ENCODE measurements at regions of chr22 and their contacts with region 1.

Region 1: GRCh38 chr22:36486619-36487384 is 5.4 kb upstream of the TXN2 start:
- DNase-seq: peak; percentile 50 to 86
- ATAC-seq: no peak
- H3K4me3 ChIP-seq: no peak overlapping the region
- H3K4me3 Mint-ChIP-seq: no peak overlapping the region
- H3K27ac ChIP-seq: no peak overlapping the region
- H3K27ac Mint-ChIP-seq: no peak overlapping the region
- H3K4me1 ChIP-seq: peaks cover 7% of the 10 kb centered on the region
- H3K4me1 Mint-ChIP-seq: peaks cover 0 to 5% of the 10 kb centered on the region in 2 donors
- H3K27me3 ChIP-seq: no peaks in the 10 kb centered on the region
- H3K27me3 Mint-ChIP-seq: no peaks in the 10 kb centered on the region
- CTCF ChIP-seq: peak; percentile 56

Region 2: GRCh38 chr22:36301384-36301828 is 185.4 kb before region 1 on chr22:
- intact Hi-C with region 1: loop called (anchors 1 kb)
- DNase-seq: peak; percentile 79 to 92
- ATAC-seq: peak; percentile 88 to 97 (median 92)
- H3K4me3 ChIP-seq: no peak overlapping the region
- H3K4me3 Mint-ChIP-seq: no peak overlapping the region
- H3K27ac ChIP-seq: no peak overlapping the region
- H3K27ac Mint-ChIP-seq: peak overlapping the region in 1 of 2 donors; percentile 64
- H3K4me1 ChIP-seq: peaks cover 7% of the 10 kb centered on the region
- H3K4me1 Mint-ChIP-seq: peaks cover 4 to 14% of the 10 kb centered on the region in 2 donors
- H3K27me3 ChIP-seq: no peaks in the 10 kb centered on the region
- H3K27me3 Mint-ChIP-seq: no peaks in the 10 kb centered on the region
- CTCF ChIP-seq: peak; percentile 95

Region 3: GRCh38 chr22:36445158-36445668 is 41.6 kb before region 1 on chr22:
- intact Hi-C with region 1: no loop called
- DNase-seq: no peak
- ATAC-seq: no peak
- H3K4me3 ChIP-seq: no peak overlapping the region
- H3K4me3 Mint-ChIP-seq: no peak overlapping the region
- H3K27ac ChIP-seq: no peak overlapping the region
- H3K27ac Mint-ChIP-seq: no peak overlapping the region
- H3K4me1 ChIP-seq: peaks cover 52% of the 10 kb centered on the region
- H3K4me1 Mint-ChIP-seq: peaks cover 9 to 29% of the 10 kb centered on the region in 2 donors
- H3K27me3 ChIP-seq: no peaks in the 10 kb centered on the region
- H3K27me3 Mint-ChIP-seq: peaks cover 0 to under 1% of the 10 kb centered on the region in 2 donors
- CTCF ChIP-seq: no peak

Measured in natural killer cell (primary cell).